Activated CD4-positive, alpha-beta T cell treated with anti-CD3 and anti-CD28 coated beads for 36 hours (primary cell): ENCODE measurements at regions of chr2 and their contacts with region 1.

Region 1: DNA sequence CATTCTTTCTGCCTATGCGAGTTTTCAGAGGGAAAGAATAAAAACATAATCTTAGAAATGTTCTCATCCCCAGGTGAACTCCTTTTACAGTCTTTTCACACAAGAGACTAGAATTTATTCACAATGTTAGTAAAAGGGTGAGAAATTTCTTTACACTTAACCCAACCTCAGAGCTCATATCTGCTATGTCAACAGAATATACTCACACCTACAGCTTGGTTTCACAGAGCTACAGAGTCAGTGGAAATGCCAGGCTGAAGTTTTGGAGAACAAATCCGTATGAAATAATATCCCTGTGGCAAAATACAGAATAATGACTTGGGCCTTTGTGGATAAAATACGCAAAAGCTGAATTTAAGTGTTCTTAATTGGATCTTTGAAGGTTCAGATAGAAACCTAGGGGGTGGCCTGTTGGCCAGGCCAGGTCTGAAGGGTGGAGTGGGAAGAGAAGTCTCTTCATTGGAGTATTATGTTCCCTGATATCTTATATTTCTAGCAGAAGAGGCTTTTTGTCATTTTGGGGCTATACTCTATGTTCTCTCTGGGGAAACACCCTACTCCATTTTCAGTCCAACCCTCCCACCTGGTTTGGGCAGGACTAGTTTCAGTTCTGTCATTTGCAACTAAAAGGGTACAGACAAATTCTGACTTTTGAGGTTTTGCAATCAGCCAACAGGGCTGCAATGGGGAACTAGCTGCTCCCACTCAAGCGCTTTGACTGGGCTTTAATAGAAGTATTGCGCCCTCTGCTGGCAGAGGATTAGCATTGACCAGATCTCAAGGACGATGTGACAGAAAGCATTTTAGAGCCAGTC is 25.7 kb downstream of the FBXO48 start:
- DNase-seq: peak; percentile 92
- ATAC-seq: peak; percentile 98
- H3K4me3 Mint-ChIP-seq: no peak overlapping the region
- H3K27ac Mint-ChIP-seq: no peak overlapping the region
- H3K4me1 Mint-ChIP-seq: peaks cover 14% of the 10 kb centered on the region
- H3K27me3 Mint-ChIP-seq: peaks cover 2% of the 10 kb centered on the region

Region 2: GRCh38 chr2:68121873-68122679 is 319.3 kb before region 1 on chr2:
- CTCF ChIA-PET with region 1: interaction called, 14 read pairs
- POLR2A ChIA-PET with region 1: no interaction called
- intact Hi-C with region 1: loop called (anchors 1 to 5 kb)
- DNase-seq: peak; percentile 87
- ATAC-seq: no peak
- H3K4me3 Mint-ChIP-seq: no peak overlapping the region
- H3K27ac Mint-ChIP-seq: no peak overlapping the region
- H3K4me1 Mint-ChIP-seq: peaks cover 2% of the 10 kb centered on the region
- H3K27me3 Mint-ChIP-seq: no peaks in the 10 kb centered on the region

Region 3: GRCh38 chr2:68290901-68291300 is 150.5 kb before region 1 on chr2:
- CTCF ChIA-PET with region 1: interaction called, 9 read pairs
- POLR2A ChIA-PET with region 1: no interaction called
- intact Hi-C with region 1: loop called in 1 of 2 experiments (anchors 5 kb)
- DNase-seq: no peak
- ATAC-seq: no peak
- H3K4me3 Mint-ChIP-seq: no peak overlapping the region
- H3K27ac Mint-ChIP-seq: no peak overlapping the region
- H3K4me1 Mint-ChIP-seq: no peaks in the 10 kb centered on the region
- H3K27me3 Mint-ChIP-seq: peaks cover 8% of the 10 kb centered on the region

Region 4: GRCh38 chr2:68379184-68379708 is 62.1 kb before region 1 on chr2:
- CTCF ChIA-PET with region 1: interaction called, 11 read pairs
- POLR2A ChIA-PET with region 1: no interaction called
- intact Hi-C with region 1: no loop called
- DNase-seq: peak; percentile 46
- ATAC-seq: peak; percentile 93
- H3K4me3 Mint-ChIP-seq: no peak overlapping the region
- H3K27ac Mint-ChIP-seq: peak overlapping the region; percentile 44
- H3K4me1 Mint-ChIP-seq: peaks cover 8% of the 10 kb centered on the region
- H3K27me3 Mint-ChIP-seq: peaks cover 12% of the 10 kb centered on the region

Region 5: DNA sequence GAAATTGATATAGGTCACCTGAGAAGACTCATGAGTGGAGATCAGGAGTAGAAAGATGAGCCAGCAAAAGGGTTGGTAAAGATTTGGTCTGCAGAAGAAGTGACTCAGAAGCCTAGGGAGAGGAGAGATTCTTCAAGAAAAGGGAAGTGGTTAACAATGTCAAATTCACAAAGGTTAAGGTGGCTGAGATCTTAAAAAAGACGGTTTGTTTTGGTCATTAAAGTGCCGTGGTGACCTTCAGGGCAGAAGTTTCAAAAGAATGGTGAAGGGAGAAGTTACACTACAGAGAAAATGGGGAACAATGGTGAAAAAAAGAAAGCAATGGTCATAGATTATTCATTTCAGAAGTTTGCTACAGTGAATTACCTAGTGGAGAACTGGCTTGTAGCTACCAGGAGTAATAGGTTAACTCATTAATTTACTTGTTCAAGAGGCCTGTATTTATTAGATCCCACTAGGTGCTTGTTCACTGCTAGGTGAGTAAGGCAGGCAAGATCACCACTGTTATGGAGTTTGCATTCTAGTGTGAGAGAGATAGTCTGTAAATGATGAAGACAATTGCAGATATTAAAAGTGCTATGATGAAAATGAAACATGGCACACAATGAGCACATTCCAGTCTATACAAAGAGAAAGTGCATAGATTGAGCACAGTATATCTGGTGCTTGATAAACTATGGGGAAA is 17.3 kb before region 1 on chr2:
- CTCF ChIA-PET with region 1: interaction called, 34 read pairs
- POLR2A ChIA-PET with region 1: no interaction called
- intact Hi-C with region 1: no loop called
- DNase-seq: no peak
- ATAC-seq: peak; percentile 93
- H3K4me3 Mint-ChIP-seq: no peak overlapping the region
- H3K27ac Mint-ChIP-seq: no peak overlapping the region
- H3K4me1 Mint-ChIP-seq: peaks cover 4% of the 10 kb centered on the region
- H3K27me3 Mint-ChIP-seq: peaks cover 2% of the 10 kb centered on the region